Activated CD8-positive, alpha-beta T cell treated with anti-CD3 and anti-CD28 coated beads, Interleukin-2, amount 10 ng/mL, durations not matched to agents 7 days and 5 days (primary cell): ENCODE measurements at regions of chr9 and their contacts with region 1.

Region 1: DNA sequence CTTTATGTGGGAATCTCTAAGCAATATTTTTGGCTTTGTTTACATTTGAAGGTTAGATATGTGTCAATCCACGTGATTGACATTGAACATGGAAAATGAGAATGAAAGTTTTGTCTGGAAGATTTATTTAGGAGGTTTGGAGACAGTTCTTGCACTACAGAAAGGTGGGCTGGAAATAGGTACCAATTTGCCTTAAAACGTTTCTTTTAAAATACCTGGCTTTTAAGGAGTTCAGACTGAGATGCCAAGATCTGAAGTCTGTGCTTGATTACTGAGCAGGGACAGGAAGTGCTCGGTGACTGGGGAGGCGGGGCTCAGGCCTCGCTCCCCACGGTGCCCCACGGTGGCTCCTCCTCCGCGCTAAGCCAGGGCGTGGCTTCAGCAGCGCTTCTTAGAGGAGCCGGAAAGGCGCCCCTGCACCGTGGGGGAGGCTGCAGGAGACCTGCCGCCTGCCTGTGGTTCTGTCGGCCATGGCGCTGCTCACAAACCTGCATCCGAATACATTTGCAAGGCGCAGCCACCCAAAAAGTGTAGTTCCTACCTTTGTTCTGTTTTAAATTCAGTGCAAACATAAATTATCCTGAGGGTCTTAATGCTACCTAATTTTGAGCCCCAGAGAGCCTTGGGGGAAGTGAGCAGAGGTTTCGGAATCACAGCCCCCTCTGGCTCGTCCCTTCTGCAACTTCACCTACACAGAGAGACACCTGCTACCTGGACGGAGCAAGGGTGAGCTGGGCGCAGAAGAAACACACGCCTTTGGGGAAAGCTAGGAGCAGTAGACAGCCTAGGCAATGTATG is 49.2 kb downstream of the USP20 start:
- DNase-seq: peak; percentile 98
- ATAC-seq: peak; percentile 62
- H3K4me3 Mint-ChIP-seq: peak overlapping the region; percentile 90
- H3K27ac Mint-ChIP-seq: peak overlapping the region; percentile 99
- H3K4me1 Mint-ChIP-seq: peaks cover 57% of the 10 kb centered on the region
- H3K27me3 Mint-ChIP-seq: no peaks in the 10 kb centered on the region

Region 2: DNA sequence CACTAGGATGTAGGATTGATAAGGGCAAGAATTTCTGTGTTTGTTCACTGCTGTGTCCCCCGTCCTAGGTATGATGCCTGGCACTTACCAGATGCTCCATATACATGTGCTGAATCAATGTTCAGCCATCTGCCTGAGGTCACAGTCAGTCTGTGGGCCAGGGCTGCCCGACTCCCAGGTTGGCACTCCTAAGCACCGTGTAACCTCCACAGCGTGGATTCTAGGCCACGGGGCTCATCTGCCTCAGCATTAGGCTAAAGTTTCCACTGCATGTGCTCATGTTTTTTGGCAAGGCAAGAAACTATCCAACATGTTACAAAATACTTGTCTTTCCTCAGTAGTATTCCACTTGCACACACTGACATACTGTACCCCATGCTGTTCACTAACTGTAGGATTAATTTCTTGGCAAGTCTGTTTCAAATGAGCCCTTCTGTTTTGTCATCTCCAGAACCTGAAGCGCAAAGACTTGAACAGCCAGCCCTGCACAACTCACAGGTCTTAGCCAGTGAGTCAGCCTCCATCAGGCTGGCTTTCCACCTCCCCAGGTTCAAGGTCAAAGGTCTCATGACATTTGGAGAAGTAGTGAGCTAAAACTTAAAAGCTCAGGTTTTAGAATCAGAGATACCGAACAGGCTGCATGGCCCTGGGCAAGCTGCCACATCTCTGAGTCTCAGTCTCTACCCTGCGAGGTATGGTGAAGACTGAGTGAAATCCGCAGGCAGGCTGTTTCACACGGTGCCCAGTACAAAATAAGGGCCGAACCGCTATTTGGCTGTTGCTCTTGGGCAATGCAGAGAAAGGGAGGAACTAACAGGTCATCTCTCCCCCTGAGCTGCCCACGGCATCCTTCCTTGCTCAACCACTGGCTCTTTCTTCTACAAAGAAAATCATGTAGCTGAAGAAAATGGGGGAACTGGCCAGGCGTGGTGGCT is 67.7 kb before region 1 on chr9:
- CTCF ChIA-PET with region 1: no interaction called
- POLR2A ChIA-PET with region 1: no interaction called
- DNase-seq: no peak
- ATAC-seq: no peak
- H3K4me3 Mint-ChIP-seq: no peak overlapping the region
- H3K27ac Mint-ChIP-seq: peak overlapping the region; percentile 46
- H3K4me1 Mint-ChIP-seq: peaks cover 19% of the 10 kb centered on the region
- H3K27me3 Mint-ChIP-seq: no peaks in the 10 kb centered on the region

Region 3: DNA sequence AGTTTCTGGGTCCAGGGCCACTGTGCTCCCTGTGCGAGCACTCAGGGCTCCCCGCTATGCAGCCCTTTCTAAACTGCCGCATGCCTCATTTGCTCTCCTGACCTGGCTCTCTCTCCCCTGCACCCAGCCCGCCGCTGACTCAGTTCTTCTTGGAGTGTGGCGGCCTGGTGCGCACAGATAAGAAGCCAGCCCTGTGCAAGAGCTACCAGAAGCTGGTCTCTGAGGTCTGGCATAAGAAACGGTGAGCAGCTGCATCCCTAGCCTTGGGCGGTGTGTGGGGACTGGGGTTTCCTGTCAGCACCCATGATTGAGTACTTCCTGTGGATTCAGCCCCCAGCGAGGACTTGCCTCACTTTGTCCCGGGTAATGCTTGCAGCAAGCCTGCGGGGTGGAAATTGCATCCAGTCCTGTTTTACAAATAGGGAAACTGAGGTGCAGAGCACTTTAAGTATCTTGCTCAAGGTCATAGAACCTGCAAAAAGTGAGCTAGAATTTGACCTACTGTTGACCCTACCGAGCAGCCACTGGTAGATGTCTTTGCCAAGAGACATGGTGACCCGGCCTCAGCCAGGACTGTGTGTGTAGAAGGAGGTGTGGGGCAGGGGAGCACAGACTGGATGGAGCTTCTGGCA is 21.2 kb before region 1 on chr9:
- CTCF ChIA-PET with region 1: interaction called, 25 read pairs
- POLR2A ChIA-PET with region 1: interaction called, 126 read pairs
- DNase-seq: peak; percentile 93
- ATAC-seq: peak; percentile 84
- H3K4me3 Mint-ChIP-seq: peak overlapping the region; percentile 55
- H3K27ac Mint-ChIP-seq: peak overlapping the region; percentile 92
- H3K4me1 Mint-ChIP-seq: peaks cover 80% of the 10 kb centered on the region
- H3K27me3 Mint-ChIP-seq: no peaks in the 10 kb centered on the region

Region 4: GRCh38 chr9:129898191-129898590 is 13.8 kb after region 1 on chr9:
- CTCF ChIA-PET with region 1: interaction called, 21 read pairs
- POLR2A ChIA-PET with region 1: interaction called, 19 read pairs
- DNase-seq: no peak
- ATAC-seq: no peak
- H3K4me3 Mint-ChIP-seq: no peak overlapping the region
- H3K27ac Mint-ChIP-seq: peak overlapping the region; percentile 60
- H3K4me1 Mint-ChIP-seq: peaks cover 55% of the 10 kb centered on the region
- H3K27me3 Mint-ChIP-seq: no peaks in the 10 kb centered on the region

Region 5: DNA sequence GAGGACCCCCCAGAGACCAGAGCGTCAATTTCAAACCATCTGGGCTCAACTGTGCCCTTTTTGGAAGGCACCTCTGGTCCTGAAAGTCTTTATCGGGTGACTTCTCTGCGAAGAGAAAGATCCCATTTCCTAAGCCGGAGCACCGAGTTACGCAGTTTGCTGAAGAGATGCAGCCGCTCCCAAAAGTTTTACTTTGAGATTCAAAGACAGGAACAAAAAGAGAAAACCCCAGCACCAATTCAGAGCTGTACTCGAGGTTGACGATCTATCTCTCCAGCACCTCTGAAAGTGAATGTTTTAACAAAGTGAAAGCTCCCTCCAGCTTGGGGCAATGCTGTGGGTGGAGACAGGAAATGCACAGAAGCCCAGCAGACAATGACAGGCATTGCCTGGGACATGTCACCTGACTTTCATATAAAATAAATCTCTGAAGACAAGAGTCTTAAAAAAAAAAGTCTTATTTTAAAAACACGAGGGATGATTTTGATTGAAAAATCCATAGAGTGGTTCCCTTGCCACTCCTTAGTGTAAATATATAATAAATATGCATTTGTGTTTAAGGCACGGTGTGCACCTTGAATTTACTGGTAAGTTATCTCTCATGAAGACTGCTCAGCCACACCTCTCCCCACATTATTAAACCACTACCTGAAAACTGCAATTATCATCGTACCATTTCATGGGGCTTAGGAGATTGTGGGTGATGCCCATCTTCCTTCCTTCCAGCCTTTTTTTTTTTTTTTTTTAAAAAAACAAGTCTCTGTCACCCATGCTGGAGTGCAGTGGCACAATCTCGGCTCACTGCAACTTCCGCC is 78.7 kb after region 1 on chr9:
- CTCF ChIA-PET with region 1: interaction called, 16 read pairs
- POLR2A ChIA-PET with region 1: interaction called, 31 read pairs
- DNase-seq: peak; percentile 89
- ATAC-seq: peak; percentile 97
- H3K4me3 Mint-ChIP-seq: peak overlapping the region; percentile 84
- H3K27ac Mint-ChIP-seq: peak overlapping the region; percentile 96
- H3K4me1 Mint-ChIP-seq: peaks cover 73% of the 10 kb centered on the region
- H3K27me3 Mint-ChIP-seq: no peaks in the 10 kb centered on the region

Region 6: GRCh38 chr9:130042833-130043653 is 158.6 kb after region 1 on chr9 and contains the start of gene FNBP1:
- CTCF ChIA-PET with region 1: interaction called, 43 read pairs
- POLR2A ChIA-PET with region 1: interaction called, 138 read pairs
- DNase-seq: peak; percentile 83
- ATAC-seq: peak; percentile 63
- H3K4me3 Mint-ChIP-seq: peak within 1 kb of the TSS; percentile 99
- H3K27ac Mint-ChIP-seq: peak within 1 kb of the TSS; percentile 98
- H3K4me1 Mint-ChIP-seq: peaks cover 48% of the 10 kb centered on the region
- H3K27me3 Mint-ChIP-seq: no peaks in the 10 kb centered on the region
- total RNA-seq, gene FNBP1: 173 to 176 TPM